Right ventricle myocardium superior (tissue), 1 donor: ENCODE measurements at regions of chr2 and their contacts with region 1.

Region 1: GRCh38 chr2:237165405-237166276 is 80.0 kb downstream of the COPS8 start:
- DNase-seq: no peak
- ATAC-seq: no peak

Region 2: GRCh38 chr2:235746257-235747084 is 1419.2 kb before region 1 on chr2:
- intact Hi-C with region 1: no loop called
- DNase-seq: no peak
- ATAC-seq: peak; percentile 92

Region 3: DNA sequence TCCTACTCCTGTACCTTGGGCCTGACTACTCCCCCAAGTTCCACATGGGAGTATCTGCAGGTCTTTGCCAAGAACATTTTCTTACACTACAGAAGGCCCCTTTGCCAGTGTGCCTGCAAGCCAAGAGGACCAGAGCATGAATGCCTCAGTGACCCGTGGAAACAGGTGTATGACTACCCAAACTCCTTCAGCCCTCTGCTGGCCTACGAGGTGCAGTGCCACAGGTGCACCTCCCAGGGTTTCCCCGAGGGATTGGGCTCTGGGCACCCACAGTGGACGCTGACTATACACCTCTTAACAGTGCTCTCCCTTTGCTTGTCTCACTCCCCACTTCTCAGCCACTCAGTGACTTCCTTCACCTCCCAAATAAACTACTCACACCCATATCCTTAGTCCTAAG is 156.9 kb after region 1 on chr2:
- intact Hi-C with region 1: loop called (anchors 10 kb)
- DNase-seq: no peak
- ATAC-seq: peak; percentile 21